ENCODE measurements at regions of chr3 and their contacts with region 1.

Region 1: DNA sequence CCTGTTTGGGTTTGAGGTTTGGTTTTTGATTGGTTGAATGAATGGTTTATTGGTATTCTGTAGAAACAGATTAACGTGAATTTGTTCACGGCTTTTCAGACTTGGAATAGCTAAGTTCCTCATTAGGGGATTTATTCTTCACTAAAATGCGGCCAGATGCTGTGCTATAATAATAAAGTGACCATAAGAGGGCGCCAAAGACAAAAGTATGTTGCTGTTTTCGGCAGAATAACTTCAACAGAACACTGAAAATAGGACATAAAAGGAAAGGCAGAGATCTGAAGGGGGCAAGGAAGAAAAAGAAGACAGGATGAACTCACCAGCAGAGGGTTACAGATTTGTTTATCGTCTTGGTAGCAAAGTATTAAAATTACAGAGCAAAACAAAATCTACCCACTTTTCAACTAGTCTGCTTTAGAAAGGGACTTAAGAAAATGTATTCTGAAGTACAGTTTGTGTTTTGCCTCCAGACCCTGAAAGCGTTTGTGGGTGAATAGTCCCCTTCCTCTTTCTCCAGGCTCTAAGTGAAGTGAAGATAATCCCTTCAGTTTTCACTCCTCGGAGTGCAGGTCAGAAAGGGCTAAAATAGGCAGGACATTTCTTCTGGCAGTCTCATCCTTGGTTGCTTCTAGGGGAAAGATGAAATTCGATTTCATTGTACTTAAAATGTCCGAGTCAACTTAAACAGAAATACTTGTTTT is 147.6 kb downstream of the IL20RB start:
- DNase-seq: peak; percentile 24
- H3K4me3 ChIP-seq: no peak overlapping the region
- H3K27ac ChIP-seq: no peak overlapping the region
- H3K4me1 ChIP-seq: no peaks in the 10 kb centered on the region
- H3K27me3 ChIP-seq: peaks cover 3% of the 10 kb centered on the region
- CTCF ChIP-seq: peak; percentile 22 to 62 (median 60)
- POLR2A ChIP-seq: no peak

Region 2: DNA sequence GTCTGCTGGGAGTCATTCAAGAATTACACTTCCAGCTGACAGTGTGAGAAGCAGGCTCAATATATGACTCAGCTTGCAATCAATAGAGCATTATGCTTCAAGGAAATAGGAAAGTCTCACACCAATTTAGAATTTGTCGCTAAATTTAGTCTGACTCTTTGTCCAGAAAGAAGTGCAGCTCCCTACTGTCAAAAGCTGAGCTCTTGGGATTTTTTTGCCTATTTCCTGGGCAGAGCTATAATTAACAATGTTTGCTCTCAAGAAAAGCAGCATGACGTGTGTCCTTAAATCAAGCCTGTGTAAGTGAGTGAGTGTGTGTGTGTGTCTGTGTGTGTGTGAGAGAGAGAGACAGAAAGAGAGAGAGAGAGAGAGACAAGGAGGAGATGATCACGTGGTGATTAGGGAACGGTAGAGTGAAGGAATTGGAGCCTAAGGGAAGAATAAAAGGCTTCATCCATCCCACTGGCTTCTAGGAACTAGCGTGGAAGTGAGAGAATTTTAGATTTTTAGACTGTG is 302.9 kb before region 1 on chr3:
- intact Hi-C with region 1: no loop called
- DNase-seq: no peak
- H3K4me3 ChIP-seq: no peak overlapping the region
- H3K27ac ChIP-seq: no peak overlapping the region
- H3K4me1 ChIP-seq: no peaks in the 10 kb centered on the region
- H3K27me3 ChIP-seq: no peaks in the 10 kb centered on the region
- CTCF ChIP-seq: no peak
- POLR2A ChIP-seq: no peak

Region 3: DNA sequence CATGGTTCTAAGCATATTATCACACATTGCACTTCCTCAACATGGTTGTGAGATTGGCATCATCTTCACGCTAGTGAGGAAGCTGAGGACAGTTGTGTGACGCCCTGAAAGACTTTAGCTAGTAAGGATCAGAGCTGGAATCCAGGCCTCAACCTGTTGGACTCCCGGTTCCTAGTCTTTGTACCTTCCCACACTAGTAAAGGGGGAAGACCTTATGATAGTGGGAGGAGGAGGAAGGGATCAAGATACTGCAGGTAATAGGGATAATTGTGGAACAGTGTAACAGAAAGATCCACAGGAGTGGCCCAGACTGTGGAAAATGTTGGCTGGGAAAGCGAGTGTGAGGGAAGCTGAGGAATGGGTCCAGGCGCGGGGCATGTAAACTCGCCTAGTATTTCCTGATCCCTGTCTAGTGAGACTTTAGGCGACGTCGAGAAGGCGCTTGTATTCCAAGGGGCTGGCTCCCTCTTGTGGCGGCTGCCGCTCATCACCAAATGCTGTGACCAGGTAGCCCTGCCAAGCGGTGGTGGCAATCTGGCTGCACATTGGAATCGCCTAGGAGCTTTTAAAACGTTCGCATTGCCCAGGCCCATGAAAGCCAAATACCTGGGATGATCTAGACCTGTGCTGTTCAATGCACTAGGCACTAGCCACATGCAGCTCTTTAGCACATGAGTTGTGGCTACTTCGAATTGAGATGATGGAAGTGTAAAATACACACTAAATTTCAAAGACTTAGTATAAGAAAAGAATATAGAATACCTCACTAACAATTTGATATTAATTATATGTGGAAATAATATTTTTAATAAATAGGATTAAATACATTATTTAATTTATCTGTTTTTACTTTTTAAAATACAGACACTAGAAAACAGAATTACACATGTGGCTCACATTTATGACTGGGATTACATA is 865.7 kb after region 1 on chr3:
- intact Hi-C with region 1: loop called (anchors 5 kb)
- DNase-seq: peak; percentile 55
- H3K4me3 ChIP-seq: no peak overlapping the region
- H3K27ac ChIP-seq: no peak overlapping the region
- H3K4me1 ChIP-seq: no peaks in the 10 kb centered on the region
- H3K27me3 ChIP-seq: no peaks in the 10 kb centered on the region
- CTCF ChIP-seq: peak in 3 of 4 experiments; percentile 43 to 69 (median 61)
- POLR2A ChIP-seq: no peak